ENCODE measurements at regions of chr9 and their contacts with region 1.

Region 1: DNA sequence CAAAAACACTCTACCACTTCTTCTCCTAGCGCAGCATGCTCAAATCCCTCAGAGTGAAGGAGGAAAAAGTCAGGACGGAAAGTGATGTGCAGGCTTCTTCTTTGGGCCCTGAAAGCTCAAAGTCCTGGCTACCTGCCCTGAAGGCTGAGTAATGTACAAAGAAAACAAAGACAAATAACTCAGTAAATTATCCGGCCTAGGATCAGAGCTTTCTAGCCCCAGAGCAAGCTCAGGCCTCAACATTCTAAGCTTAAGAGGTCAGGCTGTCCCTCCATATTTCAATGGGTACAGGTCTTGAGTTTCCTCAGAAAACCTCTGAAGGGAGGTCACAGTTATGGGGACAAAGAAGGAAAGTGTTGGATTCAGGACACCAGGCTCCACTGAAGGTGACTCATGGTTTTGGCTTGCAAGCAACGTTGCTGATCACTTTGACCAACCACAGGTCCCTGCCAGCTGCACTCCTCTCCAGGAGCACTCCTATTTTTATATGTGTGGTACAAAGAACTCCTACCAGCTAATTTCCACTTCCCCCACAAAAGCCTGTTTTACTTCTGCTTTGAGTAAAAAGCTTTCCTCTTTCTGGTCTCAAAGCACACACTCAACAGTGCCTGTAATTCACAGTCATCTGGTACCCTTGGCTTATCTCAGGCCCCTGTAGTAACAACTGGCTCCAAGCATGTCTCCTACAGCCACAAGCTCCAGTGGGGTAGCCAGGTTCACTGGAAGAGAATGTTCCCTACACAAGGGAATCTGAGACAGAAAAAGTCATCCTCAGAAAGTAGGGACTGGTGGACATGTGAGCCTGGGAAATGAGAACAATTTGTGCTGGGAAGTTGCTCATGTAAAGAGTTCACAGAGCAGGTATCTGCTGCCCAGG is 115.7 kb downstream of the UGCG start:
- DNase-seq: peak; percentile 62 to 79
- ATAC-seq: peak; percentile 92 to 93
- H3K4me3 ChIP-seq: no peak overlapping the region
- H3K27ac ChIP-seq: peak overlapping the region; percentile 59 to 85 (median 80)
- H3K4me1 ChIP-seq: peaks cover 18 to 25% of the 10 kb centered on the region in 2 donors
- H3K27me3 ChIP-seq: no peaks in the 10 kb centered on the region
- CTCF ChIP-seq: no peak
- POLR2A ChIP-seq: peak in 1 of 2 donors; percentile 17

Region 2: GRCh38 chr9:111957856-111958652 is 54.2 kb before region 1 on chr9:
- in situ Hi-C with region 1: no loop called
- intact Hi-C with region 1: loop called (anchors 2 kb)
- DNase-seq: no peak
- ATAC-seq: peak; percentile 75 to 81
- H3K4me3 ChIP-seq: peak overlapping the region in 1 of 4 donors; percentile 24
- H3K27ac ChIP-seq: peak overlapping the region; percentile 27 to 73 (median 50)
- H3K4me1 ChIP-seq: peaks cover 12 to 19% of the 10 kb centered on the region in 2 donors
- H3K27me3 ChIP-seq: no peaks in the 10 kb centered on the region
- CTCF ChIP-seq: no peak
- POLR2A ChIP-seq: no peak

Region 3: GRCh38 chr9:111969061-111969460 is 43.2 kb before region 1 on chr9:
- in situ Hi-C with region 1: no loop called
- intact Hi-C with region 1: no loop called
- DNase-seq: no peak
- ATAC-seq: no peak
- H3K4me3 ChIP-seq: no peak overlapping the region
- H3K27ac ChIP-seq: no peak overlapping the region
- H3K4me1 ChIP-seq: peaks cover 0 to 3% of the 10 kb centered on the region in 2 donors
- H3K27me3 ChIP-seq: no peaks in the 10 kb centered on the region
- CTCF ChIP-seq: no peak
- POLR2A ChIP-seq: no peak

Region 4: GRCh38 chr9:112112941-112113681 is 100.8 kb after region 1 on chr9:
- in situ Hi-C with region 1: loop called in 1 of 4 experiments (anchors 25 kb)
- intact Hi-C with region 1: no loop called
- DNase-seq: no peak
- ATAC-seq: no peak
- H3K4me3 ChIP-seq: no peak overlapping the region
- H3K27ac ChIP-seq: no peak overlapping the region
- H3K4me1 ChIP-seq: no peaks in the 10 kb centered on the region
- H3K27me3 ChIP-seq: no peaks in the 10 kb centered on the region
- CTCF ChIP-seq: peak in 2 of 5 experiments; percentile 12 to 28
- POLR2A ChIP-seq: no peak